Mammary epithelial cell (primary cell): ENCODE measurements at regions of chr5 and their contacts with region 1.

Region 1: GRCh38 chr5:138900281-138900965 is 25.3 kb upstream of the LRRTM2 start:
- DNase-seq: peak; percentile 76
- H3K4me3 ChIP-seq: no peak overlapping the region
- H3K27ac ChIP-seq: peak overlapping the region; percentile 44
- H3K4me1 ChIP-seq: peaks cover 20% of the 10 kb centered on the region
- H3K27me3 ChIP-seq: no peaks in the 10 kb centered on the region
- CTCF ChIP-seq: no peak

Region 2: DNA sequence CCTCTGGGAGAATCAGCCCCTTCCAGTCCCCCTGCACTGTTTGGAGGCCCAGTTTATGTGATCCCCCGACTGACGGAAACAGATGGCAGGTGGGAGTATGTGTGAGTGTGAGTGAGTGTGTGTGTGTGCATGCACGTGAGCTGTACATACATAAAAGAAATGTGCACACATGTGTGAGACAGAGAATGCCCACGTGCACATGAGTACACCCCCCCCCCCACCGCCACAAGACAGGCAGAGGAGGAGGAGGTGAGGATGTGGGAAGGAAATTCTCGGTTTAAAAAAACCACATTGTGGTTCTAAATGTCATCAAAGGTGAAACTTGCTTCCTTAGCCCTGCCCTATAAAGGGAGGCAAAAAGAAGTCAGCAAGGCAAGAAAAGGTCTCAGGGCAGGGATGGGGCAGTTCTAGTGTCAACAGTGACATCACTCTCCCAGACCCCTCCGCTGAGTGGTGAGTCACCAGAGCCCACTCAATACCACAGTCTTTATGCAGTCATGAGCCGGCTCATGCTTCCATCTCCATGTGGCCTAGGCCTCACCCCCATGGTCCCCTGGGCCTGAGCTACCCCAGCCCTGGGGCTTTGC is 246.0 kb before region 1 on chr5:
- CTCF ChIA-PET with region 1: no interaction called
- dilution Hi-C with region 1: no loop called
- in situ Hi-C with region 1: no loop called
- intact Hi-C with region 1: loop called (anchors 10 kb)
- DNase-seq: peak; percentile 55
- H3K4me3 ChIP-seq: no peak overlapping the region
- H3K27ac ChIP-seq: no peak overlapping the region
- H3K4me1 ChIP-seq: peaks cover 13% of the 10 kb centered on the region
- H3K27me3 ChIP-seq: no peaks in the 10 kb centered on the region
- CTCF ChIP-seq: no peak

Region 3: GRCh38 chr5:138832218-138832617 is 68.2 kb before region 1 on chr5:
- CTCF ChIA-PET with region 1: no interaction called
- dilution Hi-C with region 1: loop called (anchors 5 kb)
- in situ Hi-C with region 1: no loop called
- intact Hi-C with region 1: no loop called
- DNase-seq: no peak
- H3K4me3 ChIP-seq: no peak overlapping the region
- H3K27ac ChIP-seq: no peak overlapping the region
- H3K4me1 ChIP-seq: peaks cover 4% of the 10 kb centered on the region
- H3K27me3 ChIP-seq: no peaks in the 10 kb centered on the region
- CTCF ChIP-seq: no peak

Region 4: GRCh38 chr5:138932171-138932810 is 31.9 kb after region 1 on chr5:
- CTCF ChIA-PET with region 1: no interaction called
- dilution Hi-C with region 1: loop called (anchors 5 kb)
- in situ Hi-C with region 1: no loop called
- intact Hi-C with region 1: no loop called
- DNase-seq: no peak
- H3K4me3 ChIP-seq: no peak overlapping the region
- H3K27ac ChIP-seq: no peak overlapping the region
- H3K4me1 ChIP-seq: no peaks in the 10 kb centered on the region
- H3K27me3 ChIP-seq: no peaks in the 10 kb centered on the region
- CTCF ChIP-seq: no peak

Region 5: GRCh38 chr5:139108063-139108824 is 207.8 kb after region 1 on chr5:
- CTCF ChIA-PET with region 1: no interaction called
- dilution Hi-C with region 1: no loop called
- in situ Hi-C with region 1: no loop called
- intact Hi-C with region 1: no loop called
- DNase-seq: peak; percentile 50
- H3K4me3 ChIP-seq: no peak overlapping the region
- H3K27ac ChIP-seq: no peak overlapping the region
- H3K4me1 ChIP-seq: peaks cover 23% of the 10 kb centered on the region
- H3K27me3 ChIP-seq: no peaks in the 10 kb centered on the region
- CTCF ChIP-seq: no peak